Activated naive CD4-positive, alpha-beta T cell treated with anti-CD3 and anti-CD28 coated beads for 36 hours (primary cell): ENCODE measurements at regions of chr1 and their contacts with region 1.

Region 1: GRCh38 chr1:31815752-31816500 is at the start of gene SPOCD1:
- DNase-seq: peak; percentile 95
- H3K4me3 Mint-ChIP-seq: no peak within 1 kb of the TSS
- H3K27ac Mint-ChIP-seq: no peak within 1 kb of the TSS
- H3K4me1 Mint-ChIP-seq: peaks cover 10% of the 10 kb centered on the region
- H3K27me3 Mint-ChIP-seq: no peaks in the 10 kb centered on the region
- total RNA-seq, gene SPOCD1: 0.21 to 0.30 TPM

Region 2: GRCh38 chr1:31683997-31684396 is 131.9 kb before region 1 on chr1:
- CTCF ChIA-PET with region 1: no interaction called
- intact Hi-C with region 1: no loop called
- DNase-seq: no peak
- H3K4me3 Mint-ChIP-seq: no peak overlapping the region
- H3K27ac Mint-ChIP-seq: no peak overlapping the region
- H3K4me1 Mint-ChIP-seq: no peaks in the 10 kb centered on the region
- H3K27me3 Mint-ChIP-seq: no peaks in the 10 kb centered on the region

Region 3: GRCh38 chr1:31831397-31832378 is 15.8 kb after region 1 on chr1:
- CTCF ChIA-PET with region 1: interaction called, 10 read pairs
- intact Hi-C with region 1: no loop called
- DNase-seq: no peak
- H3K4me3 Mint-ChIP-seq: no peak overlapping the region
- H3K27ac Mint-ChIP-seq: no peak overlapping the region
- H3K4me1 Mint-ChIP-seq: peaks cover 23% of the 10 kb centered on the region
- H3K27me3 Mint-ChIP-seq: no peaks in the 10 kb centered on the region

Region 4: DNA sequence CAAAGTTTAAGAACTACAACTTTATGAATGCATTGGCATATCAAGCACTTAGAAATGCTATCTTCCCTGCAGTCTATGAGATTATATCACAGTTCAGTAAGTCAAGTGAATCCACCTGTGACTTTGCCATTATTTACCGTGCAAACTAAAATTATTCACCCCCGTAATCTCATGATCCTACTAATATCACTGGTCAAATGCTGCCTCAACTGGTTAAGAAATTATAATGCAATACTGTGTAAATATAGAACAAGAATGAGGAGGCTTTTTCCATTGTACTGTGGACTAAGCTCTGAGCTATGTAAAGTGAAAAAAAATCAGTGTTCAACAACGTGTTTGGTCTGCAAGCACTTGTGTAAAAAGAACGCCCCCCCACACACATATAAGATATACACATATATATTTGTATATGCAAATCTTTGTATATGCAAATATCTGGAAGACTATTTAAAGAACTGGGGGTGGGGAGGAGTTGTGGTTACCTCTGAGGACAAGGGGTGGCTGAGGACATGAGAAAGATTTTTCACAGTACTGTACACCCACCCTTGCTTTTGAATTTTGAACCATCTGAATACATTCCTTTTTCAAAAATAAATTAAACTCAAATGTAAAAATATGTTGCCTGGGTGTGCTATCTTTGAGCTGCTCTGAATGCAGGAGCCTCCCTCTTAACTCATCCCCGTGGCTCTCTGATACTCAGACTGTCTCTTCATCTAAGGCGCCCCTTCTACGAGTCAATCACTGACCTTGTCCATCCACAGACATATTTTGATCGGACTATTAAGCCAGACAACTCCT is 65.2 kb after region 1 on chr1:
- CTCF ChIA-PET with region 1: no interaction called
- intact Hi-C with region 1: no loop called
- DNase-seq: no peak
- H3K4me3 Mint-ChIP-seq: no peak overlapping the region
- H3K27ac Mint-ChIP-seq: no peak overlapping the region
- H3K4me1 Mint-ChIP-seq: peaks cover 15% of the 10 kb centered on the region
- H3K27me3 Mint-ChIP-seq: no peaks in the 10 kb centered on the region

Region 5: DNA sequence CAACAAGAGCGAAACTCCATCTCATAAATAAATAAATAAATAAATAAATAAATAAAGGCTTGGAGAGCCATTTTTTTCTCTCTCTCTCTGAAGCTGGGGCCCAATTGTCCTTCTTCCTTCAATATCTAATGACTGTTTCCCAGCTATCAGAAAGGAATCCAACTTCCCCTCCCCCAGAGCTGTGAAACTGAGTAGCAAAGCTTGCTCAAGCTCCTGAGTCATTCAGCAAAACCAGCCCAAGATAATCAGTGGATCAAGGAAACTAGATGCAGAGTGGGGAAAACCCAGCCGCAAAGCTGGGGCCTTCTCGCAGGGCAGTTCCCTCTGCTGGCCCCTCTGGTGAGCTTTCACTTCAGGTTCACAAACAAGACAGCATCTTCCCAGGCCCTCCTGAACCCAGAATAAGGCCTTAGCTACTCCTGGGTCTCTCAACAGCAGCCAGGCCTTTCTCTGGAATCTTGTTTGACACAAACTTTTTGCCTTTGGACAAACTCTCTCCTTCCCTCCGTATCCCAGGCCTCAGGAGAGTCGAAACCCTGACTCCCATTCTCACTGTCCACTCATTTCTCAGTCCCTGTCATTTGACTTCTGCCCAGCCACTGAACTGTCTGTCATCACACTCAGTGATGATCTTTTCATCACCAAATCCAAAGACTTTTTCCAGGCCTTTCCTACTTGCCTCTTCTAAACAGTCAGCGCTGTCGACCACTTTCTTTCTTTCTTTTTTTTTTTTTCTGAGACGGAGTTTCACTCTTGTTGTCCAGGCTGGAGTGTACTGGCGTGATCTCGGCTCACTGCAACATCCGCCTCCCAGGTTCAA is 140.2 kb after region 1 on chr1:
- CTCF ChIA-PET with region 1: interaction called, 65 read pairs
- intact Hi-C with region 1: loop called (anchors 2 kb)
- DNase-seq: peak; percentile 95
- H3K4me3 Mint-ChIP-seq: peak overlapping the region; percentile 40
- H3K27ac Mint-ChIP-seq: peak overlapping the region; percentile 90
- H3K4me1 Mint-ChIP-seq: peaks cover 75% of the 10 kb centered on the region
- H3K27me3 Mint-ChIP-seq: no peaks in the 10 kb centered on the region

Region 6: DNA sequence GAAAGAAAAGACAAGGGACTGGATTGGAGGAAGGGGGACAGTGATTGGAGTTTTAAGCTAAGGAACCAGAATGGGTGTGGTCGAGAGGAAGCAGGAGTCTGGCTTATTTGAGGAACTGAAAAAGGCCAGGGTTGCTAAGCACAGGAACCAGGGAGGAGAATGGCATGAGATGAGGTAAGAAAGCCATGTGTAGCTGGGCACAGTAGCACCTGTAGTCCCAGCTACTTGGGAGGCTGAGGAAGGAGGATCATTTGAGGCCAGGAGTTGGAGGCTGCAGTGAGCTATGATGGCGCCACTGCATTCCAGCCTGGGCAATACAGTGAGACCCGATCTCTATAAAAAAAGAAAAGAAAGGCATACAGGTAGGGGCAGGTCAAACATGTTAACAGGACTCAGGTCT is 189.6 kb after region 1 on chr1:
- CTCF ChIA-PET with region 1: interaction called, 10 read pairs
- intact Hi-C with region 1: no loop called
- DNase-seq: no peak
- H3K4me3 Mint-ChIP-seq: no peak overlapping the region
- H3K27ac Mint-ChIP-seq: no peak overlapping the region
- H3K4me1 Mint-ChIP-seq: peaks cover 4% of the 10 kb centered on the region
- H3K27me3 Mint-ChIP-seq: no peaks in the 10 kb centered on the region

Region 7: GRCh38 chr1:32221980-32222755 is 406.2 kb after region 1 on chr1 and contains the starts of genes EIF3I and TMEM234:
- CTCF ChIA-PET with region 1: no interaction called
- intact Hi-C with region 1: no loop called
- DNase-seq: peak; percentile 96
- H3K4me3 Mint-ChIP-seq: peak within 1 kb of the TSS; percentile 95
- H3K27ac Mint-ChIP-seq: peak within 1 kb of the TSS; percentile 97
- H3K4me1 Mint-ChIP-seq: peaks cover 35% of the 10 kb centered on the region
- H3K27me3 Mint-ChIP-seq: no peaks in the 10 kb centered on the region
- total RNA-seq, gene EIF3I: 382 to 391 TPM
- total RNA-seq, gene TMEM234: 5.1 to 6.4 TPM

Region 8: DNA sequence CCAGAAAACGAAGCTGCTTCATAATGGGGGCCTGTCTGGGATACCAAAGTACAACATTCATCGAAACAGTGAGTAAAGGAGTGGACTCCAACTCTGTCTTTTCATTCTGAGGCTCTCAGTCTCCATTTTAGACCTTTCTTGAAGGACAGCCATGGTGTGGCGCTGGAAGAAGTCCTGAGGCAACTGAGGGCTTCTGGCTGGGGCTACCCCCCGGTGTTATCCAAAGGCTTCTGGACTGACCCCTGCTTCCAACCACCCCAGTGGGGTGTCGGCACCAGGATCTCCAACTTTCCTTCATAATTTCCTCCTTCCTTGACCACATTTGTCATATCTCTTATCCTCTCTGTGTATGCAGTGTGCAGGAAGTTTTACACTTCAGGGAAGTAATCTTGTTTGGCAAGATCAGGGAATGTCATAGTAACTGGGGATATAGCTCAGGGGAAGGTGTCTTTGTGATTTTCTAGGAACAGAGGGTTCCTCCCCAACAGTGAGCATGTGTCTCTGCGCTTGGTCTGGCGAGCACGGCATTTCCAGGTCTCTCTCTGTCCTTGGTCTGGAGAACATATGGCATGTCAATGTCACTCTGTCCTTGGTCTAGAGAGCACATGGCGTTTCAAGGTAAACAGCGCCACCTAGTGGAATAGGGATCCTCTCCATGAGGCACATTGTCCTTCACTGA is 597.7 kb after region 1 on chr1:
- CTCF ChIA-PET with region 1: no interaction called
- intact Hi-C with region 1: loop called (anchors 5 kb)
- DNase-seq: peak; percentile 84
- H3K4me3 Mint-ChIP-seq: no peak overlapping the region
- H3K27ac Mint-ChIP-seq: no peak overlapping the region
- H3K4me1 Mint-ChIP-seq: peaks cover 3% of the 10 kb centered on the region
- H3K27me3 Mint-ChIP-seq: peaks cover 7% of the 10 kb centered on the region